Activated CD4-positive, alpha-beta memory T cell treated with anti-CD3 and anti-CD28 coated beads for 36 hours (primary cell): ENCODE measurements at regions of chr4 and their contacts with region 1.

Region 1: DNA sequence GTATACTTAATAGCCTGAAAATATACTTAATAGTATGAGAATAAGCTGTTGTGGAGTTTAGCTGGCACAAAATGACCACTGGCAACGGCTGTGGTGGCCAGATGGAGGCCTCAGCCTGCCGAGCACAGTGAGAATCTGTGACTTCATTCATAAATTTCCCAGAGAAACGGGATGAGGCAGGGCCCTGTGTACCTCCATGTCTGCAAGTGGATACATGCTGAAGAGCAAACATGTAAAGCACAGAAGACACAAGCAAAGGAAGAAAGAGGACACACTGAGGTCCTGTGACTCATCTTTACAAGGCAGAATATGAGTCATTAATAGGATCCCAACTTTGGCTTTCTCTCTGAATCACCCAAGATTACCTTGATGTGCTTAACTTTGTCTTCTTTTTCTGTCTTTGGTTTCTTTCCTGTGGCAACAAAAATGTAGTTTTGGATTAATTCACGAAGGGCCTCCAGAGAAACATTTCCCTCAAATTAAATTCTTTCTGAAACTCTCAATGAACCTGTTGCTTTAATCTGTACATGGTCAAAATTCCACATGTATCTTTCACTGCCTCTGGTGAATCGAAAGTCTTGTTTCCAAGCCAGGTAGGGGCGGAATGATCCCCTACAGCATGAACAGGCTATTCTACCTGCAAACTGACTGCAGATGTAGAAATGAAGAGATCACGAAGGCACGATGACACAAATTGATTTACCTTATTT is 56.4 kb downstream of the IRF2 start:
- DNase-seq: peak; percentile 23
- H3K4me3 Mint-ChIP-seq: peak overlapping the region; percentile 23
- H3K27ac Mint-ChIP-seq: peak overlapping the region; percentile 91
- H3K4me1 Mint-ChIP-seq: peaks cover 90% of the 10 kb centered on the region
- H3K27me3 Mint-ChIP-seq: no peaks in the 10 kb centered on the region

Region 2: DNA sequence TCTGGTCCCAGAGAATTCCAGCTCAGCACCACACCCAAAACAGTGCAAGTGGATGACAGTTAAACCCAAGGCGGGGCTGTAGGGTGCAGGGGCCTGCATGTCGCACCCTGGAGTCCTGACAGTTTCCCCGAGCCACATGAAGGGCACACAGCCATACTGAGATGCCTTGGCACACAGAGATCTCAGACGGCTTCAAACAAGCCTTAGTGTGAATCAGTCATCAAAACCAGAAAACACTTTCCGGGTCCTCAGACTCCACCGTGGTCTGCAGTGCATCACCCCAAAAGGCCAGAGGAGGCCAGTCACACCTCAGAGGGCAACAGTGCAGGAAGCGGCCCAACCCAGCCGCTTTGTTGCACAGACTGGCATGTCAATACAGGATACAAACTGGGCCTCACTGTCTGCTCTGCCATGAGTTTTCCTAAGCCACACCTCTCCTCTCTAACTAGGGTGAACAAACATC is 135.7 kb before region 1 on chr4:
- CTCF ChIA-PET with region 1: interaction called, 7 read pairs
- POLR2A ChIA-PET with region 1: interaction called, 15 read pairs
- intact Hi-C with region 1: loop called (anchors 1 kb)
- DNase-seq: peak; percentile 87
- H3K4me3 Mint-ChIP-seq: peak overlapping the region; percentile 10
- H3K27ac Mint-ChIP-seq: peak overlapping the region; percentile 91
- H3K4me1 Mint-ChIP-seq: peaks cover 71% of the 10 kb centered on the region
- H3K27me3 Mint-ChIP-seq: peaks cover 4% of the 10 kb centered on the region

Region 3: DNA sequence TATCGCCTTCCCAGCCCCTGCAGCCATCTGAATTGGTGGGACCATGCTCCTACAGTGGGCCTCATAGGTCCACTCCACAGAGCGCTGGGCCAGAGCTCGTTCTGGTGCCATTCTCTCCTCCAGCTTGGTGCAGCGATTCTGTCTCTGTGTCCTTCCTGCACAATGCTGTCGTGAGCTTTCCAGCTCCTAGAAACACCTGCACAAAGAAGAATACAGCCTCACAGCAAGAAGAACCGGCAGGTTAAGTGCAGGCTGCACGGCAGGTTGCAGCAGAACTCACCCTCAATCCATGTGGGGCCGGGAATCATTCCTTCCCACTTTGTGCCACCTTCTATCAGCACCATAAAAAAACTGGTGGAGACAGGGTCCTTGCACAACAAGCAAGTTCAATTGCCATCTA is 99.1 kb before region 1 on chr4:
- CTCF ChIA-PET with region 1: no interaction called
- POLR2A ChIA-PET with region 1: no interaction called
- intact Hi-C with region 1: loop called (anchors 1 kb)
- DNase-seq: no peak
- H3K4me3 Mint-ChIP-seq: no peak overlapping the region
- H3K27ac Mint-ChIP-seq: no peak overlapping the region
- H3K4me1 Mint-ChIP-seq: peaks cover 34% of the 10 kb centered on the region
- H3K27me3 Mint-ChIP-seq: peaks cover 1% of the 10 kb centered on the region

Region 4: DNA sequence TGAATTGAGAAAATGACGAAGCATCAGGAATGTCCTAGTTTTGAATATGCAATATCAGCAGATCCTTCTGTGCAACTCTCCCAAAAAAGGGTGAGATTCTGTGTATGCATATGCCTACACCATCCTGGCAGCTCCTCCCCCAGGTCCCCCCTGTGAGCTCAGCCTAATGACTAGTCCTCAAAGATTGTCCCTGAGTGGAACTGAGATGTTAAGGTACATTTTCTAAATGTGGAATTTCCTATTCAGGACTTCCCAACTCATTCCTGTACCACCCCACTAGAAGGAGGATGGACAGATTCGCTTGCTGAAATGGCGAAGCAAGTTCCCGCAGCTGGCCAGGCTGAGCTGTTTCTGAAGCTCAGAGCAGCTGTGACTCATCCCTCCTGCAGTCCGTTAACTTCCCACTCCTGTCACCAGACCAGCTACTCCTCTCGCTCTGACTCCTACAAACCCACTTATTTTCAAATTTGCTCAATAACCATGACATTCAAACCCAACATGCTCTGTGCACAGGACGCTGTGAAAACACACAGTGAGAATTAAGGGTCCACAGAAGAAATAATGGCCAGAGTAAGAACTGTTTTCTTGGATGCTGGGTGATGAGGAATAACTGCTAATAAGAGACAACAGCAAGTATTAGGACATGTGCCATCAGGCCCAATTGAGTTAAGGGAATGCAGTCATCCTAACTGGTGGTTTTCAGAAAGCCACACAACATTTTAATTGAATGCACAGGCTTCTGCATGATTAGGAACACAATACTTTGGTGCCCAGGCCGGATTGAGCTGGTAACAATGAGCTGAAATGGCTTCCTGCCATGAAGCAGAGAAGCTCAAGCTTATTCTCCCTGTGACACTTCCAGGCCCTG is 96.4 kb after region 1 on chr4:
- CTCF ChIA-PET with region 1: no interaction called
- POLR2A ChIA-PET with region 1: interaction called, 15 read pairs
- intact Hi-C with region 1: loop called (anchors 1 kb)
- DNase-seq: peak; percentile 90
- H3K4me3 Mint-ChIP-seq: peak overlapping the region; percentile 38
- H3K27ac Mint-ChIP-seq: peak overlapping the region; percentile 88
- H3K4me1 Mint-ChIP-seq: peaks cover 42% of the 10 kb centered on the region
- H3K27me3 Mint-ChIP-seq: no peaks in the 10 kb centered on the region

Region 5: DNA sequence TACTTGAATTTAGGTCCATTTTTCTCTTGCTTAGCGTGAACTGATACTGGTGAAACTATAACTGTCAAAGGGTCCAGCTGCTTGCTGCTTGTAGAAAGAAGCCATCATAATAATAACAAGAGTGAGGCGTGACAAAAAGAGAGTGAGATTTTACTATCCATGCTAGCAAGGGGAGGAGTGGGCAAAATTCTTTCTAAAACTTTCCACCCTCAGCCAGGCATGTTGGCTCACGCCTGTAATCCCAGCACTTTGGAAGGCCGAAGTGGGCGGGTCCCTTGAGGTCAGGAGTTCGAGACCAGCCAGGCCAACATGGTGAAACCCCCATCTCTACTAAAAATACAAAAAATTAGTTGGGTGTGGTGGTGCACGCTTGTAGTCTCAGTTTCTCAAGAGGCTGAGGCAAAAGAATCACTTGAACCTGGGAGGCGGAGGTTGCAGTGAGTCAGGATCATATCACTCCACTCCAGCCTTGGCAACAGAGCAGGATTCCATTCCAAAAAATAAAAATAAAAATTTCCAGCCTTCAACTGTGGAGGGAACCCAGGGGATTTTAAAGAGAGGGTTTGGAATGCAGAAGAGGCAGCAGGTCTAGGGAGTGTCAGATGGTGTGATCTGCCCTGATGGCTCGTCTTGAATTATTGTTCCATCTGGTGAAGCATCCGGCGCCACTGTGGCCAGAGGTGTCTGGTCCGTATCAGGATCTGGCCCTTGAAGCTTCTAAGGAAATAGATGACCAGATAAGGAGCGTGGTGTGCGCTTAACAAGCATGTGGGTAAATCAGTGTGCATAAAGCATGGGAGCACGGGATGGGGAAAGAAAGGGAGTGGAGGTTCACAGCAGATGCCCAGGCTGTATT is 926.0 kb after region 1 on chr4:
- CTCF ChIA-PET with region 1: no interaction called
- POLR2A ChIA-PET with region 1: no interaction called
- intact Hi-C with region 1: loop called (anchors 5 kb)
- DNase-seq: peak; percentile 33
- H3K4me3 Mint-ChIP-seq: no peak overlapping the region
- H3K27ac Mint-ChIP-seq: peak overlapping the region; percentile 79
- H3K4me1 Mint-ChIP-seq: peaks cover 65% of the 10 kb centered on the region
- H3K27me3 Mint-ChIP-seq: no peaks in the 10 kb centered on the region